ENCODE measurements at regions of chr3 and their contacts with region 1.

Region 1: GRCh38 chr3:115146431-115147328 is at the start of gene ZBTB20:
- DNase-seq: peak; percentile 80
- H3K4me3 ChIP-seq: peak within 1 kb of the TSS; percentile 85
- H3K27ac ChIP-seq: peak within 1 kb of the TSS; percentile 95
- H3K4me1 ChIP-seq: peaks cover 14% of the 10 kb centered on the region
- H3K27me3 ChIP-seq: no peaks in the 10 kb centered on the region
- CTCF ChIP-seq: no peak
- total RNA-seq, gene ZBTB20: 13.5 and 14.9 TPM in 2 replicates

Region 2: GRCh38 chr3:114816052-114816451 is 330.6 kb before region 1 on chr3:
- CTCF ChIA-PET with region 1: no interaction called
- POLR2A ChIA-PET with region 1: no interaction called
- intact Hi-C with region 1: no loop called
- DNase-seq: peak; percentile 67
- H3K4me3 ChIP-seq: no peak overlapping the region
- H3K27ac ChIP-seq: no peak overlapping the region
- H3K4me1 ChIP-seq: no peaks in the 10 kb centered on the region
- H3K27me3 ChIP-seq: peaks cover 23% of the 10 kb centered on the region
- CTCF ChIP-seq: no peak

Region 3: DNA sequence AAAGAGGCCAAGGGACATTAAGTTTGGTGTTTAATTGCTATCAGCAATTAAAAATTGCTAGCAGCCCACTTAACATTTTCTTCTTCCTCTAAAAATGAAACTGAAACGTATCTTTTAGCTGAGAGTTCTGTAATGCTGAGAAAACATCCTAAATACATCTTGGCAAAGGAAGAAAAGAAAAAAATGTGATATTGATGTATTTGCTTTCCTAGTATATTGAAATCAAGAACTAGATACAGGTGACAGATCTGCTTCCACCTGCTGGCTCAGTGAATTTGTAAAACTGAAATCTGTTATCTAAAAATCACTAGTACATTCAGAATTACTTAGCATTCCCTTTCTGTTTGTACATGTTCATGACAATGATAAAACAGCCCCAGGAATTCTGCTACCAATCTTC is 282.8 kb before region 1 on chr3:
- CTCF ChIA-PET with region 1: no interaction called
- POLR2A ChIA-PET with region 1: interaction called, 21 read pairs
- intact Hi-C with region 1: no loop called
- DNase-seq: no peak
- H3K4me3 ChIP-seq: no peak overlapping the region
- H3K27ac ChIP-seq: no peak overlapping the region
- H3K4me1 ChIP-seq: no peaks in the 10 kb centered on the region
- H3K27me3 ChIP-seq: no peaks in the 10 kb centered on the region
- CTCF ChIP-seq: no peak